ENCODE measurements at regions of chr5 and their contacts with region 1.

Region 1: GRCh38 chr5:141691867-141692532 is 10.0 kb upstream of the ARAP3 start:
- DNase-seq: peak; percentile 51
- ATAC-seq: peak; percentile 98
- H3K4me3 ChIP-seq: peak overlapping the region in 1 of 2 experiments; percentile 33; a peak in 1 of 4 replicates
- H3K27ac ChIP-seq: no peak overlapping the region
- H3K4me1 ChIP-seq: peaks cover 0 to 18% of the 10 kb centered on the region in 2 experiments; a peak in 3 of 4 replicates
- H3K27me3 ChIP-seq: no peaks in the 10 kb centered on the region
- CTCF ChIP-seq: peak; percentile 90 to 98 (median 92)
- POLR2A ChIP-seq: no peak
- RAD21 ChIP-seq: peak; percentile 100

Region 2: GRCh38 chr5:141968914-141969608 is 277.1 kb after region 1 on chr5 and contains the start of gene RNF14:
- CTCF ChIA-PET with region 1: interaction called, 10 read pairs
- POLR2A ChIA-PET with region 1: no interaction called
- RAD21 ChIA-PET with region 1: interaction called in 1 of 2 experiments, 3 read pairs
- intact Hi-C with region 1: no loop called
- DNase-seq: peak; percentile 83
- ATAC-seq: peak; percentile 97
- H3K4me3 ChIP-seq: peak within 1 kb of the TSS; percentile 74 to 83
- H3K27ac ChIP-seq: peak within 1 kb of the TSS; percentile 83
- H3K4me1 ChIP-seq: peaks cover 6 to 16% of the 10 kb centered on the region in 2 experiments
- H3K27me3 ChIP-seq: no peaks in the 10 kb centered on the region
- CTCF ChIP-seq: peak; percentile 44 to 79 (median 67); a peak in 5 of 6 replicates
- POLR2A ChIP-seq: peak; percentile 34
- RAD21 ChIP-seq: no peak; the same call in 1 of the 2 replicates
- total RNA-seq, gene RNF14: 37.5 TPM

Measured in HCT116 (cell line).